ENCODE measurements at regions of chr12 and their contacts with region 1.

Region 1: GRCh38 chr12:64669270-64669842 is 59.1 kb downstream of the RASSF3 start:
- DNase-seq: peak; percentile 51
- CTCF ChIP-seq: no peak

Region 2: DNA sequence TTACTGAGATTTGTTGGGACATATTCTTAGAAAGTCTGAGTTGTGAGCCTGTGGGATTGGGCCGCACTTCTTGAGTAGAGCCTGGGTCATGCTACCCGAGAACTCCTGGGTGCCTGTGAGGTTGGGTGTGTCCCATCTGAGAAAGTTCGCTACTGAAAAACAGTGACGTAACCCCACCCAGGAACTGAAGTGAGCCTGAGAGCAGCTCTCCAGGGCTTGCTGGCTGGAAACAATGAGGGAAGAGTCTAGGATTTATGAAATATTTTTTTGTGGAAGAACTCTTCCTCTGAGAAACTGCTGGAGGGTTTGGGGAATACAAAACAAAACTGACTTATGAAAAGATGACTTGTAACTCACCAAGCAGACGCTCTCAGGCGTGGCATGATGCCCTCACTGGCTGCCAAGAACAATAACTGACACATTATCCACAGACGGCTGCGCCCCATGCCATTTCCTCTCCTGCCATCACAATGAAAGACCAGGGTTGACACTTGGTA is 10.2 kb after region 1 on chr12:
- CTCF ChIA-PET with region 1: interaction called, 10 read pairs
- POLR2A ChIA-PET with region 1: interaction called, 10 read pairs
- DNase-seq: no peak
- CTCF ChIP-seq: no peak

Region 3: GRCh38 chr12:64687816-64688215 is 18.5 kb after region 1 on chr12:
- CTCF ChIA-PET with region 1: interaction called, 3 read pairs
- POLR2A ChIA-PET with region 1: interaction called, 12 read pairs
- DNase-seq: no peak
- CTCF ChIP-seq: no peak